ENCODE measurements at regions of chr20 and their contacts with region 1.

Region 1: DNA sequence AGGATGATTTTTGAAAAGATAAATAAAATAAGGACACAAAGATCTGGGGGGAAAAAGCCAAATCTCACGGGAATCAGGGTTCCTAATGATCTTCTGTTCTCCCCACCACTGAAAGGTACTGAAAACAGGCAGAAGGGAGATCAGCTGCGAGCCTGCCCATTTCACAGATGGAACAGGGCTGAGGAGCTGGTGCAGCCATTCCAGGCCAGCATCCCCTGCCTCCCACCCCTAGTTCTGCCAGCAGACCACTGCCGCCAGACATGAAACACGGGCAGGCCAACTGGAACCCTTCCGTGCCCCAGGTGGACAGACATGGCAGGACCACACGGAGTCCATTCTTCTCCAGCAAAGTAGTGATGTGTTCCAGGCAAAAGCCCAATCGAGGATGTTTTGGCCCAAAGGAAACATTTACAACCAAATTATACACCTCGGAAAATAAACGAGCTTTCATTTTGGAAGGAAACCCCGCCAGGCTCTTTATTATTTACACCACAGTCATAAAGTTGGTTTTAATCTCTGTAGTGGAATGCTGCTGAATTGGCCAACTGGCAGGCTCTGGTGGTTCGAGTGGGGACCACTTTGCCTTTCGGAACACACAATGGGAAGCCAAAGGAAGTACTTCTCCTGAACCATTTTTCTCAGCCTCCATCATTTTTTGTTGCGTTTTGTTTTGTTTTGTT is 28.2 kb downstream of the ISM1 start:
- DNase-seq: no peak
- ATAC-seq: no peak
- H3K4me3 Mint-ChIP-seq: no peak overlapping the region
- H3K27ac Mint-ChIP-seq: peak overlapping the region; percentile 94
- H3K4me1 Mint-ChIP-seq: peaks cover 61% of the 10 kb centered on the region
- H3K27me3 Mint-ChIP-seq: no peaks in the 10 kb centered on the region

Region 2: GRCh38 chr20:13061381-13061780 is 187.9 kb before region 1 on chr20:
- CTCF ChIA-PET with region 1: no interaction called
- POLR2A ChIA-PET with region 1: no interaction called
- intact Hi-C with region 1: no loop called
- DNase-seq: no peak
- ATAC-seq: no peak
- H3K4me3 Mint-ChIP-seq: no peak overlapping the region
- H3K27ac Mint-ChIP-seq: no peak overlapping the region
- H3K4me1 Mint-ChIP-seq: no peaks in the 10 kb centered on the region
- H3K27me3 Mint-ChIP-seq: no peaks in the 10 kb centered on the region

Region 3: GRCh38 chr20:13183005-13183404 is 66.3 kb before region 1 on chr20:
- CTCF ChIA-PET with region 1: no interaction called
- POLR2A ChIA-PET with region 1: no interaction called
- intact Hi-C with region 1: loop called in 1 of 2 experiments (anchors 2 kb)
- DNase-seq: peak; percentile 30
- ATAC-seq: peak; percentile 78
- H3K4me3 Mint-ChIP-seq: no peak overlapping the region
- H3K27ac Mint-ChIP-seq: no peak overlapping the region
- H3K4me1 Mint-ChIP-seq: no peaks in the 10 kb centered on the region
- H3K27me3 Mint-ChIP-seq: no peaks in the 10 kb centered on the region

Region 4: DNA sequence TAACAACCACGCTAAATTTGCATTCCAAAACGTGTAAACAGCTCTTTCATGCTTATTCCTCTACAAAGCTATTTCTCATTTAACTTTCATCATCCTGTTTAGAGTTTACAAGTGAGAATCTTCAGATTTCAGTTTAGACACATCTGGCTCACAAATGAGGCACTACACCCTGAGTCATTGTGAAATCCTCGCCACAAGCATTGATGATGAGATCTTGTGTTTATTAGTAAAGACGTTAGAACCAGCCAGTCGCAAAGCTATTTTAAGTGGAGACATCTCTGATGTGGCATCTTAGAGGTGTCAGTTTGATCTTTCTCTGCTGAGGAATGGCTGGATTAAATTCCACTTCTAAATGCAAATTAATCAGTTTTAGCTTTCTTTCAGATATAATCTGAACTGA is 36.5 kb before region 1 on chr20:
- CTCF ChIA-PET with region 1: no interaction called
- POLR2A ChIA-PET with region 1: no interaction called
- intact Hi-C with region 1: loop called in 1 of 2 experiments (anchors 5 kb)
- DNase-seq: peak; percentile 39
- ATAC-seq: peak; percentile 91
- H3K4me3 Mint-ChIP-seq: no peak overlapping the region
- H3K27ac Mint-ChIP-seq: no peak overlapping the region
- H3K4me1 Mint-ChIP-seq: peaks cover 4% of the 10 kb centered on the region
- H3K27me3 Mint-ChIP-seq: peaks cover 37% of the 10 kb centered on the region

Region 5: DNA sequence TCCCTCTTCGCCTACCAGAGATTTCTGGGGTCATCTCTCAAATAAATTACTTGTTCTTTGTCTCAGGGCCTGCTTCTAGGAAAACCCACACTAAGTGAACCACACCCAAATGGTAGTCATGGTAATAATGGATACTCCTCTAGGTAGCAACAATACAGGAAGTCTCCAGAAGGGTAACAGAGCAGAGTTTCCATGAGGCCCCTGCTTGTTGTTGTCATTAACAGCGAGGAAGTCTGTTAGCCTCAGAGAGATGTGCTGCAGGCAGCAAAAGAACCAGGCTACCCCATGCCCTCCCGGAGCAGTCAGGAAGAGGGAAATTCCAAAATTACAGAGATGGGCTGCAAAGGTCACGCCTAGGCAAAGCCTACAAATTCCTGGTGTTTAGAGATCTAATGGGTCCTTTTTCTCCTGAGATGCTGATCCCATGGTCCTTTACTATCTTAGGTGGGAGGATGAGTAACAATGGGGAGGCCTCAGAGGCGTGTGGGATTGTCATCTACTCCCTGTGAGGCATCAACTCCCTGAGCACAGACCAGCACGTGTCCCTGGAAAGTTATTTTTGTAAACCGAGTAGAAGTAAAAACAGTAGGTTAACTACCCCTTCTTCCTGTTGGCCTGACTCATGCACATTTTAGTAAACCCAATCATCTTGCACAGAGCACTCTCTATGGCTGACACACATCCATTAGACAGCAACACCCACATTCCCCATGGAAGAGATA is 18.1 kb before region 1 on chr20:
- CTCF ChIA-PET with region 1: interaction called, 11 read pairs
- POLR2A ChIA-PET with region 1: interaction called, 6 read pairs
- intact Hi-C with region 1: loop called (anchors 1 kb)
- DNase-seq: peak; percentile 56
- ATAC-seq: peak; percentile 79
- H3K4me3 Mint-ChIP-seq: peak overlapping the region; percentile 6
- H3K27ac Mint-ChIP-seq: peak overlapping the region; percentile 75
- H3K4me1 Mint-ChIP-seq: peaks cover 41% of the 10 kb centered on the region
- H3K27me3 Mint-ChIP-seq: no peaks in the 10 kb centered on the region

Region 6: DNA sequence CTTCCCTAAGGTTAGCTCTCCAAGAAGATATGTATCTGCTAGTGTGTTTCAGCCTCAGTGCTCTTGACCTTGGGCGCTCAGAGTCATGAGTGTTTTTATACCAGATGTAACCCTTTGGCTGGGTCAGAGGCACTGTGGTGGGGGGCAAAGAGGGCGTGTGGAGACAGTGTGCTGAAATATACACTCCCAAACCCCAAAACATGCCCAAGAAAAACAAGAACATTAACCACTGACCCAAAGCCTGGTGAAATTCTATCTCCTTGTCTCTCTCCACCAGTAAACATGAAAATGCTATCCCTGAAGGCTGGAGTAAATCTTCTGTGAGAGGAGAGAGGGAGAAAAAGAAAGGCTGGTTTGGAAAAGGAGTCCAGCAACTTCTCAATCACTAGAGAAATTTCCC is 19.7 kb after region 1 on chr20:
- CTCF ChIA-PET with region 1: no interaction called
- POLR2A ChIA-PET with region 1: no interaction called
- intact Hi-C with region 1: no loop called
- DNase-seq: no peak
- ATAC-seq: no peak
- H3K4me3 Mint-ChIP-seq: no peak overlapping the region
- H3K27ac Mint-ChIP-seq: no peak overlapping the region
- H3K4me1 Mint-ChIP-seq: peaks cover 3% of the 10 kb centered on the region
- H3K27me3 Mint-ChIP-seq: no peaks in the 10 kb centered on the region

Measured in activated CD4-positive, alpha-beta T cell treated with anti-CD3 and anti-CD28 coated beads for 36 hours (primary cell).